ENCODE measurements at regions of chr4 and their contacts with region 1.

Region 1: DNA sequence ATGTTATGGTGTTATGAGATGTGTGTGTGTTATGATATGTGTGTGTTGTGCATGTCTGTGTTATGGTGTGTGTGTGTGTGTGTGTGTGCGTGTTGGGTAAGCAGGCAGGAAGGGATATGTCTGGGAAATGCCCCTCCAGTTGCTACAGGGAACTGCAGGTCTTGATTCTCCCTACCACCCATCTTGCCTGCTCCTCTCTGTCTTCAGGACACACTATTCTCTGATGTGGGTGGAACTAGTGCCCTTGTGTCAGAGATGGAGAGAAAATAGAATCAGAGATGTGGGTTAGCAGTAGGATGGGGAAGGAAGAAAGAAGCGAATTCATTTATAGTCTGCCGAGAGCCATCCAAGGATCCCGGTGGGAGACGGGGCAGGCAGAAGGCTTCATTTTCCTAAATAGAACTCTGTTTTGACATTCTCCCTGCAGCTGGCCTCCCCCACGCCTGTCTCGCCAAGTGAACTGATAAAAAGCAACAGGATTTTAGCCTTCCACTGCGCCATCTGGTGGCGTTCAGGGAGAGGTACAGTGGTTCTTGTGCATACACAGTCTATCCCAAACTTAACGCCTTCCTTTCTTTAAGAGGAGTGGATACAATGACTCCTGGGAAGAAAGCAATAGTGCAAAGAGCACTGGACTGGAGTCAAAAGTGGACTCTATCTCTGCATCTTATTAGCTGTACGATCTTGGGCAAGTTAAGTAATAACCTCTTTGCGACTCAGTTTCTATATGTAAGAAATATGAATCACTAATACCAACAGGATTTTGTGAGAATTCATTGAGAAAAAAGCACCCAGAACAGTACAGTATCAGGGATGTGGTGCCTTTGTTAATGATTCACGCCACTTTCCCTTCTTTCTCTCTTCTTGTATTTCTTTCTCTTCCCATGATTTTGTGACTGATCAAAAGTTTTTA is 14.1 kb upstream of the MGST2 start:
- DNase-seq: peak; percentile 81
- H3K4me3 Mint-ChIP-seq: no peak overlapping the region
- H3K27ac Mint-ChIP-seq: no peak overlapping the region
- H3K4me1 Mint-ChIP-seq: peaks cover 3% of the 10 kb centered on the region
- H3K27me3 Mint-ChIP-seq: peaks cover 2% of the 10 kb centered on the region

Region 2: GRCh38 chr4:139015269-139015947 is 636.1 kb before region 1 on chr4 and contains the start of gene NOCT:
- CTCF ChIA-PET with region 1: no interaction called
- intact Hi-C with region 1: loop called (anchors 10 kb)
- DNase-seq: peak; percentile 97
- H3K4me3 Mint-ChIP-seq: peak within 1 kb of the TSS; percentile 91
- H3K27ac Mint-ChIP-seq: peak within 1 kb of the TSS; percentile 96
- H3K4me1 Mint-ChIP-seq: peaks cover 48% of the 10 kb centered on the region
- H3K27me3 Mint-ChIP-seq: no peaks in the 10 kb centered on the region
- total RNA-seq, gene NOCT: 9.3 to 10.4 TPM

Region 3: GRCh38 chr4:139137763-139138162 is 513.8 kb before region 1 on chr4:
- CTCF ChIA-PET with region 1: no interaction called
- intact Hi-C with region 1: no loop called
- DNase-seq: no peak
- H3K4me3 Mint-ChIP-seq: no peak overlapping the region
- H3K27ac Mint-ChIP-seq: no peak overlapping the region
- H3K4me1 Mint-ChIP-seq: peaks cover 4% of the 10 kb centered on the region
- H3K27me3 Mint-ChIP-seq: no peaks in the 10 kb centered on the region

Region 4: DNA sequence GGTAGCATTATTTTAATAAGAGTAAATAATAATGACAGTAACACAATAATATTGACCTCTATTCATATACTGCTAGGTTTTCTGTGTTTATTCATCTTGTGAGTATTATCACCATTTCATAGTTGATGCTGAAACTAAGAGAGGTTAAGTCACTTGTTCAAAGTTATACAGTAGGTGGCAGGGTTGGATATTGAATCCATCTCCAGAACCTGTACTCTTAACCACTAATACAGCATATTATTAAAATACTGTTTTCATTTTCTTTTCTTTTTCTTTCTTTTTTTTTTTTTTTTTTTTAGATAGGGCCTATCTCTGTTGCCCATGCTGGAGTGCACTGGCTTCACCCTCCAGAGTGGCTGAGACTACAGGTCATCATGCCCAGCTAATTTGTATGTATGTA is 467.4 kb before region 1 on chr4:
- CTCF ChIA-PET with region 1: no interaction called
- intact Hi-C with region 1: loop called (anchors 1 kb)
- DNase-seq: no peak
- H3K4me3 Mint-ChIP-seq: no peak overlapping the region
- H3K27ac Mint-ChIP-seq: no peak overlapping the region
- H3K4me1 Mint-ChIP-seq: peaks cover 3% of the 10 kb centered on the region
- H3K27me3 Mint-ChIP-seq: no peaks in the 10 kb centered on the region

Region 5: GRCh38 chr4:139416073-139416673 is 235.4 kb before region 1 on chr4:
- CTCF ChIA-PET with region 1: interaction called, 5 read pairs
- intact Hi-C with region 1: loop called (anchors 1 kb)
- DNase-seq: peak; percentile 10
- H3K4me3 Mint-ChIP-seq: no peak overlapping the region
- H3K27ac Mint-ChIP-seq: no peak overlapping the region
- H3K4me1 Mint-ChIP-seq: peaks cover 14% of the 10 kb centered on the region
- H3K27me3 Mint-ChIP-seq: no peaks in the 10 kb centered on the region

Region 6: DNA sequence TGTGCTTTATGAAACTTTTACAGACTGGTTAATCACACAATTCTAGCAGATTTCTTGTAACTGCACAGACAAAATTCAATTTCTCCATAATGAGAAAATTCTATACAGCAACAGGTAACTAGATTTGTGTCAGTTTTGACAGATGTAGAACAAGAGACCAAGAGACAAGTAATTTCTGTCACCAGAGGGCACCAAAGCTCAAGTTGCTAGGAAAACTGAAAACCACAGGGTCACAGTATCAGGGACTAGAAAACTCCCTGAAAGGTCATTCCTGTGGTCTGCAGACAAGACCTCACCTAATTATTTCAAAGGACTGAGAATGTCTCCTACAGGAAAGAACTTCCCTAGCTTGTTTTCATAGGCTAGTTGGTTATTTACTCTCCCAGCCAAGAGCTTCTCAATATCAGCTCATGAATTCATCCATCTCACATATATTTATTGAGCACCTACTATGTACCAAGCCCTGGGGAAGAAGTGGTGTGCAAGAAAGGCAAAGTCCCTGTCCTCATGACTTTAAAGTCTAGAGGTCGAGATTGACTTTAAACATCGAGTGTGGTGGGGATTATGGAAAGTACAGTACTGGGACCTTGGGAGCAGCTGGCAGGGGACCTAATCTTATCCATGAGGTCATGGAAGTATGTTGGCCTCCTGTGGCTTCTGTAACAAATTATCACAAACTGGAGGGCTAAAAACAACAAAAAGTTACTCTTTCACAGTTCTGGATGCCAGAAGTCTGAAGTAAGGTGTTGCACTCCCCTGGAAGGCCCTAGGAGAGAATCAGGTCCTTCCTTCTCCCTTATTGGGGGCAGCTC is 47.8 kb before region 1 on chr4:
- CTCF ChIA-PET with region 1: interaction called, 123 read pairs
- intact Hi-C with region 1: loop called (anchors 1 kb)
- DNase-seq: peak; percentile 55
- H3K4me3 Mint-ChIP-seq: no peak overlapping the region
- H3K27ac Mint-ChIP-seq: no peak overlapping the region
- H3K4me1 Mint-ChIP-seq: peaks cover 15% of the 10 kb centered on the region
- H3K27me3 Mint-ChIP-seq: peaks cover 12% of the 10 kb centered on the region